PC-3 (cell line): ENCODE measurements at regions of chr1 and their contacts with region 1.

Region 1: GRCh38 chr1:204925701-204926100 is 55.0 kb downstream of the NFASC start:
- DNase-seq: no peak
- ATAC-seq: no peak
- H3K4me3 ChIP-seq: no peak overlapping the region
- H3K27ac ChIP-seq: no peak overlapping the region
- H3K4me1 ChIP-seq: peaks cover 7% of the 10 kb centered on the region; the same call in 1 of the 2 replicates
- H3K27me3 ChIP-seq: peaks cover 51% of the 10 kb centered on the region
- CTCF ChIP-seq: no peak

Region 2: GRCh38 chr1:204961765-204962419 is 36.2 kb after region 1 on chr1:
- CTCF ChIA-PET with region 1: no interaction called
- POLR2A ChIA-PET with region 1: no interaction called
- intact Hi-C with region 1: loop called (anchors 1 kb)
- DNase-seq: no peak
- ATAC-seq: no peak
- H3K4me3 ChIP-seq: no peak overlapping the region
- H3K27ac ChIP-seq: no peak overlapping the region
- H3K4me1 ChIP-seq: no peaks in the 10 kb centered on the region
- H3K27me3 ChIP-seq: peaks cover 100% of the 10 kb centered on the region
- CTCF ChIP-seq: peak; percentile 27; the same call in 1 of the 2 replicates